Activated naive CD4-positive, alpha-beta T cell treated with anti-CD3 and anti-CD28 coated beads, Interleukin-2, amount 10 ng/mL, durations not matched to agents 7 days and 5 days (primary cell): ENCODE measurements at regions of chr11 and their contacts with region 1.

Region 1: DNA sequence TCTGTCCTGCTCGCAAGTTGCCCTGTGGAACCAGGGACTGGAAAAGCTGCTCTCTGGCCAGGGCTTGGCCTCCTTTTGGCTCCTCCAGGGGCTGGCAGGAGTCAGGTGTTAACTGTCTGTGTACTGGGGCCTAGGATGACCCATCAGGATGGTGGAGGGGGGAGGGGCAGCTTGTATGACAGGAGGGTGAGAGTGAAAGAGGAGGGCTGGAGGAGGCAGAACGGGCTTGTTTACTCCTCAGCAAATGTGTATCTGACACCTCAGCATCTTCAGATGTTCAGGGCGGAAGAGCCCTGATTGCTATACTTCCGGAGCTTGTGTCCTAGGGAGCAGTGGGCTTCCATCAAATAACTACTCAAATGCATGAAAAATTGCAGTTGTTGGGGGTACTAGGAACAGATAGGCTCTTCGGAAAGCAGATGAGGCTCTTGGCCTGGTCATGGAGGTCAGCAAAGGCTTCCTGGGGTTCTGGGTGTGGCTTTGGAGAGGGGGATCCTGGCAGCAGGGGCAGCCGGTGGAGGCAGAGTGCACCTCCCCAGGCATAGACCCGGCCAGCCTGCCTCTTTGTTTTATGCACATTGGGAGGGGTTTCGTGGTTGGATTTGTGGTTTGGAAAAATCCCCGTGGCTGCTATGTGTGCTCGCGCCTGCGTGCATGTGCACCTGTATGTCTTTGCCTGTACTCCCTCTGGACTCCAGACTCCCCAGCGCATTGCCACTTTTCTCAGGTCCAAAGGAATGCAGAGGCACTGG is 31.2 kb downstream of the CD82 start:
- DNase-seq: peak; percentile 87
- H3K4me3 Mint-ChIP-seq: peak overlapping the region; percentile 64
- H3K27ac Mint-ChIP-seq: peak overlapping the region; percentile 99
- H3K4me1 Mint-ChIP-seq: peaks cover 76% of the 10 kb centered on the region
- H3K27me3 Mint-ChIP-seq: no peaks in the 10 kb centered on the region

Region 2: GRCh38 chr11:44570411-44571155 is 26.1 kb before region 1 on chr11:
- CTCF ChIA-PET with region 1: interaction called, 10 read pairs
- DNase-seq: no peak
- H3K4me3 Mint-ChIP-seq: no peak overlapping the region
- H3K27ac Mint-ChIP-seq: peak overlapping the region; percentile 15
- H3K4me1 Mint-ChIP-seq: peaks cover 98% of the 10 kb centered on the region
- H3K27me3 Mint-ChIP-seq: no peaks in the 10 kb centered on the region

Region 3: GRCh38 chr11:44621140-44621681 is 24.5 kb after region 1 on chr11:
- CTCF ChIA-PET with region 1: interaction called, 26 read pairs
- DNase-seq: peak; percentile 70
- H3K4me3 Mint-ChIP-seq: no peak overlapping the region
- H3K27ac Mint-ChIP-seq: no peak overlapping the region
- H3K4me1 Mint-ChIP-seq: peaks cover 34% of the 10 kb centered on the region
- H3K27me3 Mint-ChIP-seq: no peaks in the 10 kb centered on the region